HEK293T (cell line): ENCODE measurements at regions of chr4 and their contacts with region 1.

Region 1: GRCh38 chr4:7185487-7186030 is 6.8 kb upstream of the SORCS2 start:
- DNase-seq: no peak

Region 2: DNA sequence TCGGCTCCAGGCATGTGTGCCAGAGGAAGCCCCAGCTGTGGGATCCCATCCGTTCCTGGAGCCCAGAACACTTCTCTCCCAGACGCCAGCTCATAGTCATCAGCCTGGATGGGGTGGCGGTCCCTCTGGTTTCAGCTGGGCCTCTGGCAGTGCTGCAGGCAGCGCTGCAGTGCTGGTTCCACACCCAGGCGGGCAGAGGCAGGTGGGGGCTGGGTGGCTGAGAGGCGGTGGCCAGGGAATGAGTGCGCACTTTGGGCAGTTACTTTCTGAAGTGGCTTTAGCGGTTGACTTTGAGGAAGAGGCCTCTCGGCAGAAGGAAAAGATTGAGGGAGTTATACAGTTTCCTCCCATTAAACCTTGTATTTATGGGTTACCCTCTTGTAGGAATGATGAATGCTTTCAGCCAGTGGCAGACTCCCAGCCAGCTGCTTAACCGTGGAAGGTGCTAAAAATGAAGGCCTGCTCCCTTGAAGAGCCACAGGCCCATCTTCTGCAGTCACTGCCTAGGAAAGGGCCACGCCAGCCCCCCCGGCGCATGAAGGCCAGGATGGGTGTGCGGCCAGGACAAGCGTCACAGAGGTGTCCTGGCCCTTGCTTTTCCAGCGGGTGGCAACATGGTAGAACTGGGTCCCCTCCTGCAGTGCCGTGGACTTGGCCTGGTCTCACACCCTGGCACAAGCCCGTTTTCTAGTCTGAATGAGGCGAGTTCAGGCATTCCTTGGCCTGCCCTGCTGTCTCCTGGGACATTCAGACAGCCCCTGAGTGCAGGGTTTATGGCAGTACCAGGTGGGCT is 132.4 kb before region 1 on chr4:
- CTCF ChIA-PET with region 1: interaction called, 12 read pairs
- POLR2A ChIA-PET with region 1: no interaction called
- DNase-seq: no peak

Region 3: GRCh38 chr4:7217453-7218321 is 32.1 kb after region 1 on chr4:
- CTCF ChIA-PET with region 1: no interaction called
- POLR2A ChIA-PET with region 1: no interaction called
- DNase-seq: no peak